ENCODE measurements at regions of chr3 and their contacts with region 1.

Region 1: GRCh38 chr3:177751770-177752169 is 554.5 kb upstream of the TBL1XR1 start:
- DNase-seq: no peak
- H3K4me3 ChIP-seq: no peak overlapping the region
- H3K27ac ChIP-seq: no peak overlapping the region
- H3K4me1 ChIP-seq: peaks cover 11% of the 10 kb centered on the region
- H3K27me3 ChIP-seq: no peaks in the 10 kb centered on the region
- CTCF ChIP-seq: no peak

Region 2: DNA sequence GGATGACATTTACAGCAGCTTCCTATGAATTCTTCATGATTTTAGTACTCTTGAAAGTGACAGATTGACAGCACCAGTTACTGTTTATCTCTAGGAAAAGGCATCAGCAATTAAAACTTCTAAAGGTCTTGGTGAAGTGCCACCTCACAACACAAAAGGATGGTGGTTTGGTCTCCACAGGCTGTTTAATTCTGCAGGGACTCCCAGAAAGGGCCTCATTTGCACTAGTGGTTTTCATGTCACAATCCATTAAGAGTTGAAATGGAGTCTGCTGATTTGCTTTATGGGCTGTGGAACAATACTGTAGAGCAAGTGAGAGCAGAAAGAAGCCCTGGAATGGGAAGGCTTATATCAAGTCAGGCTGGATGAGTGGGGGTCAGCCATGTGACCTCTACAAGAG is 559.2 kb after region 1 on chr3:
- CTCF ChIA-PET with region 1: no interaction called
- POLR2A ChIA-PET with region 1: interaction called, 14 read pairs
- intact Hi-C with region 1: no loop called
- DNase-seq: no peak
- H3K4me3 ChIP-seq: no peak overlapping the region
- H3K27ac ChIP-seq: no peak overlapping the region
- H3K4me1 ChIP-seq: no peaks in the 10 kb centered on the region
- H3K27me3 ChIP-seq: no peaks in the 10 kb centered on the region
- CTCF ChIP-seq: no peak